Activated naive CD4-positive, alpha-beta T cell treated with anti-CD3 and anti-CD28 coated beads for 36 hours (primary cell): ENCODE measurements at regions of chr20 and their contacts with region 1.

Region 1: DNA sequence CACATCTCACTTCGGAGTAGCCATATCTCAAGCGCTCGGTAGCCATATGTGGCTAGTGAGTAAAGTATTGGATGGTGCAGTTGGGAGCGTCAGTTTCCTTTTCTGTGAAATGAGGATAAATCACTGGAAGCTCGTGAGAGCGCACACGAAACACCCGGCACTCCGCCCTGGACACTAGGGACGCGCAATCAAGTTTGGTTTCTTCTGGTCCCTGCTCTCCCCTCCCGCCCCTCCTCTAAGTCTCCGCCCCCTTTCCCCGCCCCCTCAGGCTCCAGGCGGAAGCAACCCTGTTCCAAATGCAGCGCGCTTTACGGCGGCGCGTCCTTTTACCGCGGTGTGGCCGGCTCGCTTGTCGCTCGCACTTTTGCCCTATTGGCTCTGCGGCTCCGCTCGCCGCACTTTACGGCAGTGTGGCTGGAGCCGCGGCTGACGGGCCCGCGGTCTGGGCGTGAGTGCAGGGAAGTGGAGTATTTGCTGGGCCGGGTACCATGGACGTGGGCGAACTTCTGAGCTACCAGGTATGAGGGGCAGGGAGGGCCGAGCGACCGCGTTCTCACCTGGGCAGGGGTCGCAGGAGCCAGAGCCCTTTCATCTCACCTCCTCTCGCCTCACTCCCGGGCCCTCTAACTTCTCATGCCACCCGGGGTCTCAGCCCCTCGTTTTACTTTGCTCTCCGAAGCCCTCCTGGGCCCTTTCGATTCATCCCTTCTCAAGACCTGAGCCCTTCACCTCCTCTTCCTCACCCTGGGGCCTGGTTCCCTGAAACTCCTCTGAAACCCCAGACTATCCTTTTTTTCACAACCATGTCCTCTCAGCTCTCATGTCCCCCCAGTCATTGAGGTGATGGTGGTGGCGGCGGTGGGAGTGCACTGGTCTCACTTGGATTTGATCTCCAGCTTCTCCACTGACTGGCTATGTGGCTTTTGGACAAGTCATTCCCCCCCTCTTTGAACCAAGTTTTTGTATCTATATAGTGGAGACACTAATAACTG is at the start of gene CTNNBL1:
- DNase-seq: peak; percentile 98
- H3K4me3 Mint-ChIP-seq: peak within 1 kb of the TSS; percentile 98
- H3K27ac Mint-ChIP-seq: peak within 1 kb of the TSS; percentile 86
- H3K4me1 Mint-ChIP-seq: peaks cover 26% of the 10 kb centered on the region
- H3K27me3 Mint-ChIP-seq: peaks cover 13% of the 10 kb centered on the region
- total RNA-seq, gene CTNNBL1: 66.4 to 75.4 TPM

Region 2: GRCh38 chr20:37178839-37179670 is 514.9 kb before region 1 on chr20 and contains the starts of genes MROH8 and RPN2:
- CTCF ChIA-PET with region 1: no interaction called
- intact Hi-C with region 1: loop called (anchors 2 kb)
- DNase-seq: peak; percentile 98
- H3K4me3 Mint-ChIP-seq: peak within 1 kb of the TSS; percentile 94
- H3K27ac Mint-ChIP-seq: peak within 1 kb of the TSS; percentile 97
- H3K4me1 Mint-ChIP-seq: peaks cover 37% of the 10 kb centered on the region
- H3K27me3 Mint-ChIP-seq: no peaks in the 10 kb centered on the region
- total RNA-seq, gene MROH8: 0.54 to 0.91 TPM
- total RNA-seq, gene RPN2: 102 to 104 TPM

Region 3: DNA sequence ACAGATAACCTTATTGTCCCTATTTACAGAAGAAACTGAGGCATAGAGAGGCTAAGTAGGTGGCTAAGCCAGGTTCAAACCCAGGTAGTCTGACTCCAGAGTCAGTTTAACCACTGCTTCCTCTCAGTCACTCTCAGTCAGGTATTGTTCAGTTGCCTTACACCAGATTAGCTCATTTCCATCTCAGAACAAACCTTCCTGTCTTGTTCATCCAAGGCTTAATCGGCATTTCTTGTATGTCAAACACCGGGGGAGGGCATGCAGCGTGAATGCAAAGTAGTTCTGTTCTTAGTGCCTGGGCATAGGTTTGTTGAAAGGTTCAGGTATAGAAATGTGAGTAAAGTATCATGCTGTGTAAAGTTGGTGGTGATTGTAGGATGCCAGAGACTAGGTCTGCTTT is 51.6 kb after region 1 on chr20:
- CTCF ChIA-PET with region 1: no interaction called
- intact Hi-C with region 1: loop called (anchors 1 kb)
- DNase-seq: peak; percentile 79
- H3K4me3 Mint-ChIP-seq: peak overlapping the region; percentile 23
- H3K27ac Mint-ChIP-seq: peak overlapping the region; percentile 84
- H3K4me1 Mint-ChIP-seq: peaks cover 20% of the 10 kb centered on the region
- H3K27me3 Mint-ChIP-seq: no peaks in the 10 kb centered on the region